ENCODE measurements at regions of chr6 and their contacts with region 1.

Region 1: DNA sequence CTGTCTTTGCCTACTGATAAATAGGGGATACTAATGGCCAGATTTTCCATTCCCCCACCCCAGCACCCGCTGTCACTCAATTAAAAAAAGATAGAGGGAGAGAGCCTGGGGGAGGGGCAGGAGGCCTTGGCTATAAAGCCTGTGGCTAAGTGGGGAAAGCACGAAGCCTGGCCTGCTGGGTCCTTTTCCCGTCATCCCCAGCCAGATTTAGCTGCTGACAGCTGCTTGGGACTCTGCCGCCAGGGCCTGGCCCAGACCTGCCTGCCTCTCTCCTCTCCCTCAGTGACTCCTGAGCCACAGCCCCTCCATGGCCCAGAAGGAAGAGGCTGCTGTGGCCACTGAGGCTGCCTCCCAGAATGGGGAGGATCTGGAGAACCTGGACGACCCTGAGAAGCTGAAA is at the start of gene APOBEC2:
- DNase-seq: no peak
- ATAC-seq: no peak
- H3K4me3 ChIP-seq: peak within 1 kb of the TSS in 1 of 5 experiments; percentile 1
- H3K4me3 Mint-ChIP-seq: peak within 1 kb of the TSS; percentile 24
- H3K27ac ChIP-seq: peak within 1 kb of the TSS; percentile 35 to 67
- H3K27ac Mint-ChIP-seq: peak within 1 kb of the TSS; percentile 68
- H3K4me1 ChIP-seq: peaks cover 16 to 20% of the 10 kb centered on the region in 2 donors
- H3K4me1 Mint-ChIP-seq: peaks cover 21% of the 10 kb centered on the region
- H3K27me3 ChIP-seq: no peaks in the 10 kb centered on the region
- H3K27me3 Mint-ChIP-seq: no peaks in the 10 kb centered on the region
- CTCF ChIP-seq: no peak
- total RNA-seq, gene APOBEC2: not detected in 2 replicates

Region 2: GRCh38 chr6:40999569-40999968 is 53.5 kb before region 1 on chr6:
- CTCF ChIA-PET with region 1: no interaction called
- POLR2A ChIA-PET with region 1: no interaction called
- intact Hi-C with region 1: no loop called
- DNase-seq: peak; percentile 45
- ATAC-seq: no peak
- H3K4me3 ChIP-seq: no peak overlapping the region
- H3K4me3 Mint-ChIP-seq: no peak overlapping the region
- H3K27ac ChIP-seq: no peak overlapping the region
- H3K27ac Mint-ChIP-seq: no peak overlapping the region
- H3K4me1 ChIP-seq: no peaks in the 10 kb centered on the region
- H3K4me1 Mint-ChIP-seq: no peaks in the 10 kb centered on the region
- H3K27me3 ChIP-seq: peaks cover 0 to 29% (median 7%) of the 10 kb centered on the region in 4 experiments
- H3K27me3 Mint-ChIP-seq: peaks cover 46% of the 10 kb centered on the region
- CTCF ChIP-seq: no peak

Region 3: GRCh38 chr6:41066867-41067304 is 13.8 kb after region 1 on chr6:
- CTCF ChIA-PET with region 1: interaction called, 25 read pairs
- POLR2A ChIA-PET with region 1: no interaction called
- intact Hi-C with region 1: no loop called
- DNase-seq: peak; percentile 82
- ATAC-seq: no peak
- H3K4me3 ChIP-seq: no peak overlapping the region
- H3K4me3 Mint-ChIP-seq: no peak overlapping the region
- H3K27ac ChIP-seq: no peak overlapping the region
- H3K27ac Mint-ChIP-seq: peak overlapping the region; percentile 15
- H3K4me1 ChIP-seq: peaks cover 8% of the 10 kb centered on the region in 2 donors
- H3K4me1 Mint-ChIP-seq: peaks cover 19% of the 10 kb centered on the region
- H3K27me3 ChIP-seq: no peaks in the 10 kb centered on the region
- H3K27me3 Mint-ChIP-seq: no peaks in the 10 kb centered on the region
- CTCF ChIP-seq: peak; percentile 94

Region 4: DNA sequence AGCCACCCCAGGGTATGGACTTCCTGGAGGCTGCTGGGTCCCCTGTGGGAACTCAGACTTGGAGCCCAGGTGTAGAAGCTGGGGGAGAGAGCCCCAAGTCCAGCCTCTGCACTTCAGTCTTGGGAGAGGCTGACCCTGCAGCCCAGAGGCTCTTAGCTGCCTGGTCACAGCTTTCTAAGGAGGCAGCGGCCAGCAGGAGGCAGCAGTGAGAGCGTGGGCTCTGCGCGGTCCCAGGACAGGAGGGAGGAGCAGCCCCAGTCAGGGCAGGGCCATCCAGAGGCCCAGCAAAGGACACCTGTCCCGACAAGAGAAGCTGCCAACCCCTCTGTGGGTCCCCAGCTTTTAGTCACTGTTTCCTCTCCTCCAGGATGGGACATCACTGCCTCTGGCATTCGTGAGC is 138.5 kb after region 1 on chr6:
- CTCF ChIA-PET with region 1: no interaction called
- POLR2A ChIA-PET with region 1: no interaction called
- intact Hi-C with region 1: no loop called
- DNase-seq: peak; percentile 46
- ATAC-seq: no peak
- H3K4me3 ChIP-seq: no peak overlapping the region
- H3K4me3 Mint-ChIP-seq: no peak overlapping the region
- H3K27ac ChIP-seq: peak overlapping the region; percentile 18 to 51
- H3K27ac Mint-ChIP-seq: peak overlapping the region; percentile 26
- H3K4me1 ChIP-seq: peaks cover 40 to 55% of the 10 kb centered on the region in 2 donors
- H3K4me1 Mint-ChIP-seq: peaks cover 68% of the 10 kb centered on the region
- H3K27me3 ChIP-seq: no peaks in the 10 kb centered on the region
- H3K27me3 Mint-ChIP-seq: no peaks in the 10 kb centered on the region
- CTCF ChIP-seq: peak; percentile 22

Region 5: GRCh38 chr6:41201764-41202173 is 148.7 kb after region 1 on chr6:
- CTCF ChIA-PET with region 1: no interaction called
- POLR2A ChIA-PET with region 1: no interaction called
- intact Hi-C with region 1: no loop called
- DNase-seq: peak; percentile 70
- ATAC-seq: peak; percentile 9
- H3K4me3 ChIP-seq: peak overlapping the region; percentile 46 to 62 (median 60)
- H3K4me3 Mint-ChIP-seq: peak overlapping the region; percentile 73
- H3K27ac ChIP-seq: peak overlapping the region; percentile 90 to 94
- H3K27ac Mint-ChIP-seq: peak overlapping the region; percentile 97
- H3K4me1 ChIP-seq: peaks cover 62 to 66% of the 10 kb centered on the region in 2 donors
- H3K4me1 Mint-ChIP-seq: peaks cover 69% of the 10 kb centered on the region
- H3K27me3 ChIP-seq: no peaks in the 10 kb centered on the region
- H3K27me3 Mint-ChIP-seq: no peaks in the 10 kb centered on the region
- CTCF ChIP-seq: no peak